ENCODE measurements at regions of chr12 and their contacts with region 1.

Region 1: DNA sequence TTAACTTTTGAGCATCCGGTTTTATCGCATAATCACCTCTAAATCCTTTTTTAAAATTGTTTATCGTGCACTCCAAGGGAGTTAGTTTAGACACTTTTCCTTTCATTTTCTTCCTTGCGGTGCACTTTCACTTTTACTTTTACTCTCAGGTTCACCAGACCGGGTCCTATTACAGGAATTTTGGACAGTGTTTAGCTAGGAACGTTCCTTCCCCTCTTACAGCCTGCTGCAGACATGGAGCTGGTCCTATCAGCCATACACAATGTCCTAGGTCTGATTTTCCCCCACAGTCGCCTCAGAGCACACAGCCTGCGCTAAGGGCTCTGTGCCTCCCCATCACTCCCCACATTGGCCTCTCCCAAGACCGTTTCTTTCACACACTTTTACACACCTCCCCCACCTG is 103.9 kb downstream of the ALG10 start:
- DNase-seq: no peak
- CTCF ChIP-seq: no peak

Region 2: GRCh38 chr12:34218165-34219045 is 92.2 kb after region 1 on chr12:
- in situ Hi-C with region 1: loop called (anchors 10 kb)
- DNase-seq: peak; percentile 74
- CTCF ChIP-seq: peak; percentile 70

Measured in GM13976 (cell line).